B cell (primary cell): ENCODE measurements at regions of chr1 and their contacts with region 1.

Region 1: DNA sequence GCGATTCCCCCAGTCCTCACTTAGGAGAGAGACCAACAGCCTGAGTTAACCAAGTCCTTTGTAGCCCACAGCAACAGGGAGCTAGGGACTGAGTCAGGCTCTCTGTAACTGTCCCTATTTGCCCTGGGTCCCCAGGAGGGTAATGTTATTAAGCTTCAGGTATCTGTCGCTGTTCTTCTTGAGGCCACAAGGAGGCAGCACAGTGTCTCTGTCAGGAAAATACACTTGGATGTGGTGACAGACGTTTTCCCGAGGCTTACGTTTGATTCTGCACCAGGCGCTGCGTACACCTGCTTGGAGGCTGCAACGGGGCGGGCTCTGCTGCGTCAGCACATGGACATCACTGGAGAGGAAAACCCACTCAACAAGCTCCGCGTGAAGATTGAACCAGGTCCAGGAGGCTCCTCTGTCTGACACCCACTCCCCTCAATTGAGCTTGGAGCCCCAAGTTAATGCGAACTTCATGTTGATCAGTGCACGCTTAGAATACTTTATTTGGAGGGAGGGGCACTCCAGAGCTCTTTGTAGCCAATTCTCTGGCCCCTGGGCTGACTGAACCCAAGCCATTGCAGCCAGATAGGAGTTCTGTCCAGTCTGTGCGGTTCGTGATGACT is 10.7 kb upstream of the ELF3 start:
- DNase-seq: peak; percentile 47
- ATAC-seq: peak; percentile 49
- H3K4me3 ChIP-seq: no peak overlapping the region
- H3K4me3 Mint-ChIP-seq: no peak overlapping the region
- H3K27ac ChIP-seq: no peak overlapping the region
- H3K27ac Mint-ChIP-seq: no peak overlapping the region
- H3K4me1 ChIP-seq: no peaks in the 10 kb centered on the region
- H3K4me1 Mint-ChIP-seq: no peaks in the 10 kb centered on the region
- H3K27me3 ChIP-seq: no peaks in the 10 kb centered on the region
- H3K27me3 Mint-ChIP-seq: no peaks in the 10 kb centered on the region
- CTCF ChIP-seq: peak; percentile 71

Region 2: GRCh38 chr1:201989354-201990128 is 10.2 kb before region 1 on chr1:
- CTCF ChIA-PET with region 1: interaction called, 17 read pairs
- POLR2A ChIA-PET with region 1: no interaction called
- intact Hi-C with region 1: no loop called
- DNase-seq: no peak
- ATAC-seq: no peak
- H3K4me3 ChIP-seq: no peak overlapping the region
- H3K4me3 Mint-ChIP-seq: no peak overlapping the region
- H3K27ac ChIP-seq: no peak overlapping the region
- H3K27ac Mint-ChIP-seq: no peak overlapping the region
- H3K4me1 ChIP-seq: no peaks in the 10 kb centered on the region
- H3K4me1 Mint-ChIP-seq: peaks cover 8% of the 10 kb centered on the region
- H3K27me3 ChIP-seq: no peaks in the 10 kb centered on the region
- H3K27me3 Mint-ChIP-seq: no peaks in the 10 kb centered on the region
- CTCF ChIP-seq: no peak